ENCODE measurements at regions of chr12 and their contacts with region 1.

Region 1: GRCh38 chr12:125065021-125065795 is at the start of gene AACS:
- DNase-seq: peak; percentile 71
- H3K4me3 Mint-ChIP-seq: peak within 1 kb of the TSS; percentile 88
- H3K27ac Mint-ChIP-seq: peak within 1 kb of the TSS; percentile 73
- H3K4me1 Mint-ChIP-seq: peaks cover 15% of the 10 kb centered on the region
- H3K27me3 Mint-ChIP-seq: no peaks in the 10 kb centered on the region
- CTCF ChIP-seq: no peak
- total RNA-seq, gene AACS: 52.0 and 52.8 TPM in 2 replicates

Region 2: DNA sequence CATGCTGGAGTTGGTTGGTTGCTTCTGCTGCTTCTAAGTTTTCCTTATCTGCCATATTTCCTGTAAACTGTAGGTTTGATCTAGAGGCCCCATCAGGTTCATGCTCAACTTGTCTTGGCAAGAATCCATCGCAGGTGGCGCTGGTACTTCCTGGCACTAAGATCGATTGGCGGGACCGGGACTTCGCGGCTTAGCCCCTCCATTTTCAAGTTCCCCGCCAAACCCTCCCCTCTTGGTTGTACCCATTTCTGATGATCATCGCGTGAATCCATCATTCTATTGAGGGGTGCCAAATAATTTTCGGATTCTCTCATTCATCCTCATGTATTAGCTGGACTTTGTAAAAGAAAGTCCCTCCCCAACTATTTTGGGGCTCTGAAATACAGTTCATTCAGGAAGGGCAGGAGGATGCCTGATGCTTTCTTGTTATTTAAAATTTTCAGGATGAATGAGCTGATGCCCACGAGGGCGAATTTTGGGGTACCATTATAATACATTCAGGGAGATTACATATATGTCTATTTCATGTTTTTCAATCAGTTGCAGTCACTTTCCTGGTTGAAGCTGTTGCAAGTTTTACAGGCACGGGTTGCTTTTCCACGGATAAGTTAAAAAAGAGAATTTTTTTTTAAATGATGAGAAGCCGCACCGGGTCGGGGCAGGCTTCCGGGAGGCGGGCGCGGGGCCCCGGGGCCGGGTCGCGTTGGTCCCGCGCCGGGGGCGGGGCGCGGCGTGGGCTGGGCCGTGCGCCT is 72.2 kb before region 1 on chr12:
- CTCF ChIA-PET with region 1: no interaction called
- POLR2A ChIA-PET with region 1: interaction called, 6 read pairs
- intact Hi-C with region 1: loop called (anchors 5 kb)
- DNase-seq: peak; percentile 80
- H3K4me3 Mint-ChIP-seq: peak overlapping the region; percentile 93
- H3K27ac Mint-ChIP-seq: peak overlapping the region; percentile 25
- H3K4me1 Mint-ChIP-seq: peaks cover 15% of the 10 kb centered on the region
- H3K27me3 Mint-ChIP-seq: no peaks in the 10 kb centered on the region
- CTCF ChIP-seq: peak; percentile 54

Region 3: DNA sequence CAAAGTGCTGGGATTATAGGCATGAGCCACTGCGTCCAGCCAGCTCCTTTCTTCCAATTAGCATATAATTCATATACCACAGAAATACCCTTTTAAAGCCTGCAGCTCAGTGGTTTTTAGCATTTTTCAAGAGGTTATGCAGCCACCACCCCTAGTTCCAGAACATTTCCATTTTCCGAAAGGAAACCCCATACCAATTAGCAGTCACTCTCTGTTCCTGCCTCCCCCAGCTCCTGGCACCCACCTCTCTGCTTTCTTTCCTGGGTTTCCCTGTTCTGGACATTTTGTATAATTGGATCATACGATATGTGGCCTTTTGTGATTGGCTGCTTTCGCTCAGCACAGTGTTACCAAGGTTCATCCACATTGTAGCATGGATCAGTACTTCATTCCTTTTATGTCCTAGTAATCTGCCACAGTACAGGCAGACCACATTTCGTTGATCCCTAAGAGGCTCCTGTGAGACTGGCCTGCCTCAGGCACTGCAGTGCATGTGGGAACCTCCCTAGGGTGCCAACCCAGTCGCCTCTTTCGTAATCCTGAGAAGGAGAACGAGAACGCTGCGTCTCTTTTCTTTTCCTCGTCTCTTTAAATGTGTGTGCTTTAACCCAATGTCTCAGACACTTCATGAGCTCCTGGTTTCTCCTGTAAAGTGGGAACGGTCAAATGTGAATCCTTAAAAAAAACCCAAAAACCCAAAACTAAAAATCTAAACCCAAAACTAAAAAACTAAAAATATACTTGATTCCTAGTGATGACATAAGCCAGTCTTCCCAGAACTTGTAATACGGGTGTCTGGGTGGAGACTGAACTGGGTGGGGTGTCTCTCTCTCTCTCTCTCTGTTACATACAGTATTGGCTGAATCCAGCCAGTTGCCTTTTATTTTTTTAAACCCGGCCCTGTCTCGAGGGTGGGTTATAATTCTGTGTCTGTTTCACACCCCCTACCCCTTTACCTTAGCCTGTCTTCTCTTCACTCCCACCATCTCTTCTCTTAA is 14.7 kb after region 1 on chr12:
- CTCF ChIA-PET with region 1: interaction called, 6 read pairs
- POLR2A ChIA-PET with region 1: interaction called, 17 read pairs
- intact Hi-C with region 1: loop called (anchors 1 kb)
- DNase-seq: peak; percentile 97
- H3K4me3 Mint-ChIP-seq: peak overlapping the region; percentile 56
- H3K27ac Mint-ChIP-seq: peak overlapping the region; percentile 91
- H3K4me1 Mint-ChIP-seq: peaks cover 12% of the 10 kb centered on the region
- H3K27me3 Mint-ChIP-seq: no peaks in the 10 kb centered on the region
- CTCF ChIP-seq: no peak